Transverse colon (tissue), 4 donors: ENCODE measurements at regions of chr6 and their contacts with region 1.

Region 1: DNA sequence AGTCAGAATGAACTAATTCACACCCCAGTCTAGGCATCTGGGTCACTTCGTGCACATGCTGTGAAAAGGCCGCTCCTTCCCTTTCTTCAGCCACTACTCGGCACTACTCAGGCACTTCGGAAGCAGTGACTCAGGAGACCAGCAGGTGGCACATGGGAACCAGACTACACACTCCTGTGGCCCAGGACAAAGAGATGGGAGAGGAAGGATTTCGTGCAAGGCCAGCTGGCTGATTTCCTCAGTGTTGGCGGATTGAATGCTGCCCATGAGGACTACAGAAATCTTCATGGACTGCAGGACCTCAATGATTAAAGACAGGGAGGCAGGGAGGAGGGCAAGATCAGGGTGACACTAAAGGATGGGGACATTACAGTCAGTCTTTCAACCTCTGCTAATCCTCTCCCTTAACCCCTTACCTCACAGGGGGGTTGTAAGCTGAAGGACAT is 117.8 kb upstream of the SPACA1 start:
- DNase-seq: peak; percentile 86
- H3K4me3 ChIP-seq: no peak overlapping the region
- H3K27ac ChIP-seq: no peak overlapping the region
- H3K4me1 ChIP-seq: no peaks in the 10 kb centered on the region
- H3K27me3 ChIP-seq: no peaks in the 10 kb centered on the region
- CTCF ChIP-seq: peak; percentile 71 to 93 (median 80)
- EP300 ChIP-seq: no peak
- POLR2A ChIP-seq: no peak

Region 2: DNA sequence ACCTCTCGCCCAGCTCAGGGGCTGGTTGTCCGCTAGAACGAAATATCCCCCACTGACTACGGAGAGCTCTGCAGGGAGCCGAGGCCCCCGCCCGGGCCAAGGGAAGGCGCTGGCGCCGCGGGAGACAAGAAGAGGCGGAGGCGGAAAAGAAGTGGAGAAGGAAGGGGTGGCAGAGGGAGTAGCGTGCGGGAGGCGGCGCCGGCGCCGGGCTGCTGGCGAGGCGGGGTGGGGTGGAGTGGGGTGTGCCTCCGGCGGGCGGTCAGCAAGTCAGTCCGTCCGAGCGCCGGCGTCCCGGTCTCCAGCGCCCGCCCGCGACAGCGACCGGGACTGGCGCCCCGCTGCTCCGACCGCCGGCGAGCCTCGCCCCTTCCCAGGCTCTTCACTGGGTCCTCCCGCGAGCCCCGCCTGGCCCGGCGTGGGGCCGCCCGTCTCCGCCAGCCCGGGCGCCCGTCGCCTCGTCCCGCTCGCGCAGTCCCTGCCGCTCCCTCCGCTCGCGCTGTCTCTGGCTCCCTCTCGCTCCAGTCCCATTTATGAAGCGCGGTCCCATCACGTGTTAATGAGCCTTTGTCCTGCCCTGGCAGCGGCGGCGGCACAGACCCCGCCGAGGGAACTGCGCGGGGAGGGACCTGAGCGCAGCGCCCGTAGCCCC is 236.1 kb after region 1 on chr6 and contains the start of gene CNR1:
- in situ Hi-C with region 1: no loop called
- intact Hi-C with region 1: loop called (anchors 10 kb)
- DNase-seq: peak; percentile 84
- H3K4me3 ChIP-seq: peak within 1 kb of the TSS; percentile 40 to 72 (median 48)
- H3K27ac ChIP-seq: peak within 1 kb of the TSS; percentile 60 to 75 (median 66)
- H3K4me1 ChIP-seq: peaks cover 0 to 24% (median 7%) of the 10 kb centered on the region in 4 donors
- H3K27me3 ChIP-seq: peaks cover 62% of the 10 kb centered on the region
- CTCF ChIP-seq: peak in 2 of 5 experiments; percentile 16 to 30
- EP300 ChIP-seq: no peak
- POLR2A ChIP-seq: no peak
- total RNA-seq, gene CNR1: 6.4 to 16.1 (median 9.5) TPM

Region 3: GRCh38 chr6:88238065-88238464 is 308.2 kb after region 1 on chr6:
- in situ Hi-C with region 1: loop called in 3 of 4 experiments (anchors 10 to 25 kb)
- intact Hi-C with region 1: loop called (anchors 2 kb)
- DNase-seq: peak; percentile 33
- H3K4me3 ChIP-seq: no peak overlapping the region
- H3K27ac ChIP-seq: no peak overlapping the region
- H3K4me1 ChIP-seq: no peaks in the 10 kb centered on the region
- H3K27me3 ChIP-seq: no peaks in the 10 kb centered on the region
- CTCF ChIP-seq: peak; percentile 36 to 71 (median 50)
- EP300 ChIP-seq: no peak
- POLR2A ChIP-seq: no peak

Region 4: GRCh38 chr6:88780714-88781389 is 851.0 kb after region 1 on chr6:
- in situ Hi-C with region 1: loop called in 3 of 4 experiments (anchors 5 to 25 kb)
- intact Hi-C with region 1: no loop called
- DNase-seq: peak; percentile 37
- H3K4me3 ChIP-seq: no peak overlapping the region
- H3K27ac ChIP-seq: no peak overlapping the region
- H3K4me1 ChIP-seq: no peaks in the 10 kb centered on the region
- H3K27me3 ChIP-seq: no peaks in the 10 kb centered on the region
- CTCF ChIP-seq: peak; percentile 57 to 85 (median 81)
- EP300 ChIP-seq: no peak
- POLR2A ChIP-seq: no peak

Region 5: DNA sequence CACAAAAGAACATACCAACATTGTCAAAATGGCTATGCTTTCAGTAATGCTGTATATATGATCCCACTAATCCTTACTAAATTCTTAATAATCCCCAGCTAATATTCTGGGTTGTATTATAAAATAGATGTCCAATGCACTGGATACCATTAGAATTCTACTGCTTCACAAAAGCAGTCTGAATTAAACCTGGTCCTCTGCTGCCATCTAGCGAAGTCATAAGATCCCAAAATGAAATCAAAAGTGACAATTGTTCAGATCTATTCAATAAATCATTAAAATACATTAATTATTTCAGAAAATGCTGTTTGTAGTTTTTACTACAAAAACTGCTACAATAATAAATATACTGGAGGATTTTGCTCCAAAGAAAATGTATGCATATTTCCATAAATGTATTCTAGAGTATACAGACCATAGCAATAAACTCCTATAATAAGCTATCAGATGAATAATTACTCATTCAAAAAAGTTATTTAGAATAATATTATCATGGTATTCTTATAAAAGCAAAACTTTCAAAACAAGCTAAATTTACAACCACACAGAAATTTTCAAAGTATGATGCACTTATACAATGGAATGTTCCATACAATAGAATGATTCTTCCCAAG is 941.0 kb after region 1 on chr6:
- in situ Hi-C with region 1: loop called in 2 of 4 experiments (anchors 10 to 25 kb)
- intact Hi-C with region 1: no loop called
- DNase-seq: peak; percentile 15
- H3K4me3 ChIP-seq: no peak overlapping the region
- H3K27ac ChIP-seq: no peak overlapping the region
- H3K4me1 ChIP-seq: peaks cover 0 to 40% (median 9%) of the 10 kb centered on the region in 4 donors
- H3K27me3 ChIP-seq: no peaks in the 10 kb centered on the region
- CTCF ChIP-seq: peak; percentile 53 to 63 (median 60)
- EP300 ChIP-seq: no peak
- POLR2A ChIP-seq: no peak